Common myeloid progenitor, CD34-positive (primary cell): ENCODE measurements at regions of chr2 and their contacts with region 1.

Region 1: GRCh38 chr2:96251721-96252292 is 14.0 kb downstream of the TMEM127 start:
- DNase-seq: peak in 1 of 3 donors; percentile 27
- H3K4me3 ChIP-seq: no peak overlapping the region
- H3K27ac ChIP-seq: peak overlapping the region in 1 of 2 experiments; percentile 7
- H3K4me1 ChIP-seq: peaks cover 10 to 48% (median 39%) of the 10 kb centered on the region in 4 experiments
- H3K27me3 ChIP-seq: no peaks in the 10 kb centered on the region

Region 2: DNA sequence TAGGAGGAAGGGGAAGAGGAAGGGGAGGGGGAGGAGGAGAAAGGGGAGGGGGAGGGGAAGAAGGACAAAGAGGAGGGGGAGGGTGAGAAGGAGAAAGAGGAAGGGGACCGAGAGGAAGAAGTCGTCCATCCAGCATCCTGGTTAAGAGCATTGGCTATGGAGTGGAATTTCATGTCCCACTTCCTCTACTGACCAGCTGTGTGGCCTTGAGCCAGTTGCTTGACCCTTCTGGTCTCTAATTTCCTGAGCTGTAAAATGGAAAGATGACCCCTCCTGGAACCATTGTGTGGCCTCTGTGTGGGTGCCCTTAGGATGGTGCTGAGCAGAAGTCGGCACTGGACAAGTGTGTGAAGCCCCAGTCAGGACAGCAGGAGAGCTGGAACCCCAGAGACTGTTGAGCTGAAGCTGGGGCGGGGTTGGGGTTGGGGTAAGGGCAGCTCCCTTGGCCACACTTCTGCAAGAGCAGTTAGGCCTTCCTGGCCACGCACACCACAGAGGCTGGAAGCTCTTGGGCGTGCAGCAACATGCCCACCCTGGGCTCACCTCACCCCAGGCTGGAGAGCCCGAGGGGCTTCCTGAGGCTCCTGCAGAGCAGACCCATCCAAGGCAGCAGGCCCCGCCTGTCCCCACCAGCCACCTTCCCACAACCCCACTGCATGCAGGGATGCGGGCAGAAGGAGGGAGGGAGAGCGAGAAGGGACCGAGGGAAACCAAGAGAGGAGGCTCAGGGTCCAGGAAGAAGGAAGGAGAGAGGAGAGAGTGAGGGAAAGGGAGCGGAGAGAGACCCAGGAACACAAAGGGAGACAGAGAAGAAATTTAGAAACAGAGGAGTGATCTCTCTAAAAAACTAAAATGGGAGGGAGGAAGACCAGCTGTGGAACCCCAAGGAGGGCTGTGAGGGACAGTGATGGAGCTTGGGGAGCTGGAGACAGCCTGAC is 151.7 kb before region 1 on chr2:
- CTCF ChIA-PET with region 1: no interaction called
- POLR2A ChIA-PET with region 1: no interaction called
- DNase-seq: no peak
- H3K4me3 ChIP-seq: no peak overlapping the region
- H3K27ac ChIP-seq: no peak overlapping the region
- H3K4me1 ChIP-seq: peaks cover 0 to 6% (median under 1%) of the 10 kb centered on the region in 4 experiments
- H3K27me3 ChIP-seq: no peaks in the 10 kb centered on the region

Region 3: GRCh38 chr2:96233880-96234316 is 17.9 kb before region 1 on chr2:
- CTCF ChIA-PET with region 1: interaction called, 12 read pairs
- POLR2A ChIA-PET with region 1: interaction called, 3 read pairs
- DNase-seq: peak; percentile 38 to 56 (median 44)
- H3K4me3 ChIP-seq: no peak overlapping the region
- H3K27ac ChIP-seq: no peak overlapping the region
- H3K4me1 ChIP-seq: peaks cover 0 to 11% (median 1%) of the 10 kb centered on the region in 4 experiments
- H3K27me3 ChIP-seq: no peaks in the 10 kb centered on the region

Region 4: DNA sequence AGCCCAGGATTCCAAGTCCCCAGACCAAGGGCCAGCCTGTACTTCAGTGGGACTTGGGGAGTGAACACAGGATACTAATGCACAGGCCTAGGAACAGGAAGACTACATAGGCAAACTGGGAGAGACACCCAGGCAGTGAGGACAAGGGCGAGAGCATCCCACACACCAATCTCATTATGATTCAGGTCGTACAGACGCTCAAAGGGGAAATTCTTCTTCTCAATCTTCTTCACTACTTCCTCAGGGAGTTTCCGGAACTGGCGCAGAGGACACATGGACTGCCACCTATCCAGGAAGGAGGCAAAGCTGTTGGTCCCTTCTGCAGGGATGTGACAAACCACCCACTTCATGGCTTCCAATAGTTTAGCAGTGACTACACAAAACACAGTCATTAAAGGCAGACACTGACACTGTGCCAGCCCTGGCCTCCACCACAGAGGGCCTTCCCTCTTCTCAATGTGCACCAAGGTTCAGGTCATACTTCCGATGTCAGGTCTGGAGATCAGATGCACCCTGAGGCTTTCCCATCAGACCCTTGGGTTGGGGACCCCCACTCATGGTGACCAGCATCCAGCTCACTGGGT is 35.6 kb after region 1 on chr2:
- CTCF ChIA-PET with region 1: no interaction called
- POLR2A ChIA-PET with region 1: no interaction called
- DNase-seq: no peak
- H3K4me3 ChIP-seq: no peak overlapping the region
- H3K27ac ChIP-seq: no peak overlapping the region
- H3K4me1 ChIP-seq: no peaks in the 10 kb centered on the region
- H3K27me3 ChIP-seq: no peaks in the 10 kb centered on the region